Mucosa of descending colon (tissue), 3 donors: ENCODE measurements at regions of chr4 and their contacts with region 1.

Region 1: DNA sequence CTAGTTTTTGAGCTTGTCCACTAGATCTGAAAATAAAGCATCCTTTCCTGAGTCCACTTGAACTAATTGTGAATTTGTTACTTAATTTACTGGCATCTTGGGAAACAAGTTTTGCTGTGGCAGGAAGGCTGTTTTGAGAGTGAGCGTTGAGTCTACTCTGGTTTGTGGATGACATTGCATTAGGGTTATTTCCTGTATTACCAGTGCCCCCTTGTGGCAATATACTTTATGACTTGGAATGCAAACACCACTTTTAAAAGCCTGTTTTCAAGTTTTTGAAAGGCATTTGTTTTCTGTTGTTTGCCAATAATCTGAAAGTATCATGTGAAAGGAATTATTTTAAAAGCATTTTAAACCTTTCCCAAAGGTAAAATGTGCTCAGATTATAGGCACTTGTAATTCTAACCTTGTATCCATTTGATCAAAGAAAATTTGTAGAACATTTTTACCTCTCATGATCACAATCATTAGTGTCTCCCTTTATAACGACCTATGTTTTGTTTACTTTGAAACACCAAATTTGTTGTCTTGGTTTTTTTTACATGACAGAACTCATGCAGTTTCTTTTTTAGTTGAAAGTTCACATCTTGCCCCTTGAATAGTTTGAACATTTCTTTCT is 18.0 kb upstream of the CYP2U1 start:
- DNase-seq: peak in 1 of 3 donors; percentile 81
- ATAC-seq: peak; percentile 86
- H3K4me3 ChIP-seq: no peak overlapping the region
- H3K4me1 ChIP-seq: no peaks in the 10 kb centered on the region
- CTCF ChIP-seq: no peak

Region 2: DNA sequence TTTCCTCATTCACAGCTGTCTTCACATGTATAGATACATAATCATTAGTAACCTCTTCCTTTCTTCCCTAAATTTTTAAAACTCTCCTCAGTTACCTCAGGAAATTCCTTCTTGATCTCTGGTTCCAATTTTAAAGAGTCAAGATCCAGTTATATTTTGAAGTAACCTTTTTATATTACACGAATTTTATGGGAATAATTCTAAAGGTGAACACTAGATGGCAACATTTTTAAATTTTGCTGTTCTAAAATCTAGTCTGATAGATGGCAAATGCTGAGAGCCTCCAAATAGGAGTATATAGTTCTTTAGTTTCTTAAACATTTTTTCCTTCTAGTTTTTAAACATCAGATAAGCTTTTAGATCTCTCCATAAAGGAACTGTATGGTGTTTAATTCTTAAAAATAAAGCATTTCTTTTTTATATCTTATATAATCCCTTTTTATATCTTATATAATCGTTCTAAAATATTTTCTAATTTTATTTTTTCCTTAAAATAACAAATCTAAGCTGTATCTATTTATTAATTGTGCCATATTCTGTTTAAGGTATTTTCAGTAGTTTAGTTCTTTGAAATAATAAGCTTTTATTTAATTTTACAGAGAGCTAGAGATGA is 155.4 kb before region 1 on chr4:
- intact Hi-C with region 1: loop called (anchors 5 kb)
- DNase-seq: no peak
- ATAC-seq: no peak
- H3K4me3 ChIP-seq: no peak overlapping the region
- H3K4me1 ChIP-seq: no peaks in the 10 kb centered on the region
- CTCF ChIP-seq: peak; percentile 11